Esophagus squamous epithelium (tissue), 5 donors: ENCODE measurements at regions of chr7 and their contacts with region 1.

Region 1: DNA sequence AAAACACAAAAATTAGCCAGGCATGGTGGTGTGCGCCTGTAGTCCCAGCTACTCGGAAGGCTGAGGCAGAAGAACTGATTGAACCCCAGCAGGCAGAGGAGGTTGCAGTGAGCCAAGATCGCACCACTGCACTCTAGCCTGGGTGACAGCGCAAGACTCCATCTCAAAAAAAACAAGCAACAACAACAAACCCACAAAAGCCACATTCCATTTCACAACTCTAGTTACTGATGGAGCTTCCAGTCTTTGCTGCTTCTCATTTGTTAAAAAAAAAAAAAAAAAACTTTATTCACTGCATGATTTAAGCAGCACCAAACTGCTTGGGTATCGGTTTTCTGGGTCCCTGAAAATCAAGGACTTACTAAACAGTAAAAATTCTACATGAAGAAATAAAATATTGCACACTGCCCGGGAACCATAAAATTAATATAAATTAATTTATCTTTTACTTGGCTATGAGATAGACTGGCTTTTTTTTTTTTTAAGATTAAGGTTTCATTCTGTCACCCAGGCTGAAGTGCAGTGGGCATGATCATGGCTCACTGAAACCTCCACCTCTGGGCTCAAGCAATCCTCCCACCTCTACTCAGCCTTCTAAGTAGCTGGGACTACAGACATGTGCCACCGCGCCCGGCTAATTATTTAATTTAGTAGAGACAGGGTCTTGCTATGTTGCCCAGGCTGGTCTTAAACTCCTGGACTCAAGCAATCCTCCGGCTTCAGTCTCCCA is 42.0 kb downstream of the SRPK2 start:
- DNase-seq: no peak
- H3K4me3 ChIP-seq: no peak overlapping the region
- H3K27ac ChIP-seq: no peak overlapping the region
- H3K4me1 ChIP-seq: peaks cover 6 to 28% (median 7%) of the 10 kb centered on the region in 3 donors
- H3K27me3 ChIP-seq: no peaks in the 10 kb centered on the region
- CTCF ChIP-seq: no peak
- POLR2A ChIP-seq: no peak

Region 2: DNA sequence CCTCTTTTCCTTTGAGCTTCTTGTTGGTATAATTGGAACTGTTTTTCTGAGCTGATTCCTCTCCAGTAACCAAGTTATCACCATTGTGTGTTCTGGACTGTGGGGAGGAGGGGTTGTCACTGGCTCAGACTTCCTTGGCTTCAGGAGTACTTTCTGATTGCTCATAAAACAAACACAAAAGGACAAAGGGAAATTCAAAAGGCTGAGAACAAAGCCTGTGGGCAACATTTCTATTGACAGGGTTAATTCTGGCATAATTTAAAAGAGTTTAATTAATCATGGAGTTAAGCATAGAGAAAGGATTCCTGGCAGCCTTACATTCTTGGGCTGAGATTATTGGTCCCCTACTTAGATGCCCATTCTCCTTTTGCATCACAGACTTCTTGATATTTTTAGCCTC is 555.7 kb before region 1 on chr7:
- intact Hi-C with region 1: no loop called
- DNase-seq: no peak
- H3K4me3 ChIP-seq: no peak overlapping the region
- H3K27ac ChIP-seq: no peak overlapping the region
- H3K4me1 ChIP-seq: no peaks in the 10 kb centered on the region
- H3K27me3 ChIP-seq: peaks cover 0 to 11% (median 0%) of the 10 kb centered on the region in 4 donors
- CTCF ChIP-seq: no peak
- POLR2A ChIP-seq: no peak

Region 3: GRCh38 chr7:105141068-105141467 is 205.7 kb before region 1 on chr7:
- intact Hi-C with region 1: loop called (anchors 10 kb)
- DNase-seq: no peak
- H3K4me3 ChIP-seq: no peak overlapping the region
- H3K27ac ChIP-seq: no peak overlapping the region
- H3K4me1 ChIP-seq: no peaks in the 10 kb centered on the region
- H3K27me3 ChIP-seq: no peaks in the 10 kb centered on the region
- CTCF ChIP-seq: peak in 2 of 6 experiments; percentile 16 to 38
- POLR2A ChIP-seq: no peak

Region 4: GRCh38 chr7:105187302-105188169 is 159.2 kb before region 1 on chr7:
- intact Hi-C with region 1: no loop called
- DNase-seq: no peak
- H3K4me3 ChIP-seq: no peak overlapping the region
- H3K27ac ChIP-seq: no peak overlapping the region
- H3K4me1 ChIP-seq: peaks cover 0 to 45% (median 17%) of the 10 kb centered on the region in 3 donors
- H3K27me3 ChIP-seq: no peaks in the 10 kb centered on the region
- CTCF ChIP-seq: no peak
- POLR2A ChIP-seq: no peak

Region 5: GRCh38 chr7:105473163-105473562 is 126.4 kb after region 1 on chr7:
- intact Hi-C with region 1: no loop called
- DNase-seq: no peak
- H3K4me3 ChIP-seq: no peak overlapping the region
- H3K27ac ChIP-seq: no peak overlapping the region
- H3K4me1 ChIP-seq: no peaks in the 10 kb centered on the region
- H3K27me3 ChIP-seq: no peaks in the 10 kb centered on the region
- CTCF ChIP-seq: no peak
- POLR2A ChIP-seq: no peak